GM12878 (cell line): ENCODE measurements at regions of chr10 and their contacts with region 1.

Region 1: DNA sequence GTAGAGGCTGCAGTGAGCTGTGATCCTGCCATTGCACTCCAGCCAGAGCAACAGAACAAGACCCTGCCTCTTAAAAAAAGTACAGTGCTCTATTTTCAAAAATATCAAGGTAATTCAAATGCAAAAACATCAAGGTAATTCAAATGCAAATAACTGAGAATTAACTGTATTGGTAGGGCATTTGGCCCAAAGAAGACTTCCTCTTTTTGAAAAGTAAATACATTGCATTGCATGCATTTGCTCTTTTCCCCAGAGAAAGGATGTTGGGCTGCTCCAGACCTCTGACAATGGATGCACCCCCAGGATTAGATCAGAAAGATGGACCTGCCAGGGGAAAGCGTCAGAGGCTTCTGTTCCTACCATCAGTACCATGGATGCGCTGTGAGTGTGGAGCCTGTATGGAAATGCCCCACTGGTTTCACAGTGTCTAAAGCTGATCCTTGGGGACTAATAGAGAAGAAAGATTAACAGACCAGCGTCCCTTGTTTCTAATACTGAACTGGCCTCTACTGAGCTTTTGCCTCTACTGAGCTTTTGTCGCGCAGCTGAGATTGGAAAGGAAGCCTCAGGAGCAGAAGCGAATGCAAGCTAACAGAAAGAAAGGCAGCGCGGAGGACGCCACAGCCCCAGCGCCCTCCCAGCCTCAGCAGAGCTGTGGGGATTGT is 93.5 kb upstream of the LYZL2 start:
- DNase-seq: no peak
- ATAC-seq: no peak
- H3K4me3 ChIP-seq: no peak overlapping the region
- H3K27ac ChIP-seq: no peak overlapping the region
- H3K4me1 ChIP-seq: peaks cover 6% of the 10 kb centered on the region
- H3K27me3 ChIP-seq: no peaks in the 10 kb centered on the region
- CTCF ChIP-seq: no peak
- EP300 ChIP-seq: no peak
- POLR2A ChIP-seq: no peak
- RAD21 ChIP-seq: no peak

Region 2: DNA sequence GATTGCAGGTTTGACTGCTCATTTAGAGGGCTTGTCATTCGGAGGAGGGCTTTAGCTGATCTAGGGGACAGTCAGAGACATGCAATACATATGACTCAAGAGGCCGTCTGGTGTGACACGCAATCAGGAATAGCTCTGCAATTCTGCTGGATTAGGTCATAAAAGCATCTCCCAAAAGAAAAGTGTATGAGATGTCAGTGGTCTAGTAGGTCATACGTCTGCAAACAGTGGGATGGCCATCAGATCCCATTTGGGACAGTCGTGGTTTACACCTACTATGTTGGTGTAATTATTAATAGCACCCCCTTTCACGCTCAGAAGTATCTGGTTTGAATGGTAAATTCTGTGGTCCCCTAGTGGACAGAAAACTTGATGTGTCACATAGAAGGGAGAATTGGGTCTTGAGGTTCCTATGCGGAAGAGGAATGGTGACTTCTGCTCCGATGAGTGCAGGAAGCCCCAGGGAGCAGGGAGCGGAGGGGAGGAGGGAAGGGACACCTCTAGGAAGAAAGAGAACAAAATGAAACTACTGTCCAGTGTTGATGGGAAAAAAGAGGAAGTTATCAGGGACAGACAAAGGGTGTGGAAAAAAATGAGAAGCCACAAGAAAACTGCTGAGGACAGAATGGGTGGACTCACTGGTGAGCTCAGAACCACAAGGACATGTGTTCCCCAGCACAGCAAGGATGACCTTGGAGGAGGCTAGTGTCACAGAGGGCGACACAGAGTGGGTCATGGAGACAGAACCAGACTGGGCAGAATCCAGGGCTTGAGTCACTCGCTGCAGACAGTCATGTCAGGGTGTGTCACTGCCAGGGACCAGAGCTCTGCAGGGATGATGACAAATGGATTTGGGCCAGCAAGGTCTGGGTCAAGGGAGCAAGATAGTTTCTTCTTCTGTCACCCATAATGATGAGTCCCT is 229.2 kb before region 1 on chr10:
- CTCF ChIA-PET with region 1: no interaction called
- POLR2A ChIA-PET with region 1: no interaction called
- RAD21 ChIA-PET with region 1: no interaction called
- SMC1A ChIA-PET with region 1: no interaction called
- in situ Hi-C with region 1: no loop called
- intact Hi-C with region 1: no loop called
- DNase-seq: no peak
- ATAC-seq: peak; percentile 63
- H3K4me3 ChIP-seq: peak overlapping the region; percentile 40; the same call in 1 of the 2 replicates
- H3K27ac ChIP-seq: peak overlapping the region; percentile 87
- H3K4me1 ChIP-seq: peaks cover 88% of the 10 kb centered on the region
- H3K27me3 ChIP-seq: no peaks in the 10 kb centered on the region
- CTCF ChIP-seq: peak; percentile 20 to 45 (median 37); a peak in 5 of 6 replicates
- EP300 ChIP-seq: peak; percentile 35 to 80; a peak in 1 of 4 replicates
- POLR2A ChIP-seq: no peak
- RAD21 ChIP-seq: peak; percentile 37; the same call in 1 of the 2 replicates

Region 3: DNA sequence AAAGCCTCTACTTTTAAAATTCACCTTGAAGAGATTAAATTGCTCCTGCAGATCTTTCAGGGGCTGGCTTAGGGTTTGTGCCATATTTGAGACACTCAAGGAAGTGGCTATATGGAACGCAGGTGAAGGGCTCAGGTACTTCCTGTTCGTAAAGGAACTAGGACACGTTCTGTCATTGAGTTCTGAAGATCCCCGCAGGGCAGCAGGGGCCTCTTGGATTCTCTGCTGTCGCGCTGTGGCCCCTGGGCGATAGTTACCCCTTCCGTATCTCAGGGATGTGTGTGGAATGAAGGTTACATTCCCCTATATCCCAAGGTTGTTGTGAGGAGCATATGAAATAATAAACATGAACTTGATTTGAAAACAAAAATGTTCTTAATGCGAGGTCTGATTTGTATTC is 114.7 kb before region 1 on chr10:
- CTCF ChIA-PET with region 1: no interaction called
- POLR2A ChIA-PET with region 1: no interaction called
- RAD21 ChIA-PET with region 1: no interaction called
- SMC1A ChIA-PET with region 1: no interaction called
- in situ Hi-C with region 1: no loop called
- intact Hi-C with region 1: no loop called
- DNase-seq: no peak
- ATAC-seq: no peak
- H3K4me3 ChIP-seq: no peak overlapping the region
- H3K27ac ChIP-seq: no peak overlapping the region
- H3K4me1 ChIP-seq: no peaks in the 10 kb centered on the region
- H3K27me3 ChIP-seq: no peaks in the 10 kb centered on the region; a peak in 2 of 4 replicates
- CTCF ChIP-seq: no peak
- EP300 ChIP-seq: no peak
- POLR2A ChIP-seq: no peak
- RAD21 ChIP-seq: no peak

Region 4: GRCh38 chr10:30671026-30671616 is 52.0 kb before region 1 on chr10:
- CTCF ChIA-PET with region 1: interaction called, 23 read pairs
- POLR2A ChIA-PET with region 1: no interaction called
- RAD21 ChIA-PET with region 1: interaction called, 5 read pairs
- SMC1A ChIA-PET with region 1: interaction called, 8 read pairs
- in situ Hi-C with region 1: no loop called
- intact Hi-C with region 1: no loop called
- DNase-seq: no peak
- ATAC-seq: peak; percentile 78
- H3K4me3 ChIP-seq: no peak overlapping the region
- H3K27ac ChIP-seq: no peak overlapping the region
- H3K4me1 ChIP-seq: peaks cover 10% of the 10 kb centered on the region
- H3K27me3 ChIP-seq: no peaks in the 10 kb centered on the region
- CTCF ChIP-seq: peak; percentile 69 to 79 (median 73)
- EP300 ChIP-seq: no peak
- POLR2A ChIP-seq: no peak
- RAD21 ChIP-seq: peak; percentile 73

Region 5: DNA sequence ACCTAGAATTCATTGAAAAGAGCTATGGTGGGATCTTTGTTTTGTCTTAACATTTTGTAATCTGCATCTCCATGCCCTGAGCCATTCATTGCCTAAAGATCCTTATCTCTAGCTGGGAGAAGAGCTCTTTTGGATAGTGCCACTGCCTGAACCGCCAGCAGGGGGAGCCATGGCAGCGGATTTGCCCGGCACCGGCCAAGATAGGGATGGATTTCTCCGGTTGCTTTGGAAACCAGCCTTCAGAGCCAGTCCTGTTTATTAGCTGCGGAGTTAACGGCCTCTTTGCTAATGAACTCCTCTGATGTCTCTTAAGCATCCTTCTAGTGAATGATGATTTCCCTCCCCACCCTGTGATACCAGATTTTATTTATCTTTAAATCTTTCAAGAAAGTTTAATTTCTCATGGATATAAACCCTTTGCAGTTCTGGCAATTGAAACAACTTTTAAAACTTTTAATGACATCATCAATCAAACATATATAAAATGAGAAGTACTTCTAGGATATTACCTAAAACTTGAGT is 35.3 kb before region 1 on chr10:
- CTCF ChIA-PET with region 1: interaction called, 60 read pairs
- POLR2A ChIA-PET with region 1: no interaction called
- RAD21 ChIA-PET with region 1: interaction called, 23 read pairs
- SMC1A ChIA-PET with region 1: interaction called, 35 read pairs
- in situ Hi-C with region 1: no loop called
- intact Hi-C with region 1: loop called (anchors 1 kb)
- DNase-seq: no peak
- ATAC-seq: peak; percentile 97
- H3K4me3 ChIP-seq: no peak overlapping the region
- H3K27ac ChIP-seq: no peak overlapping the region
- H3K4me1 ChIP-seq: peaks cover 5% of the 10 kb centered on the region; the same call in 1 of the 2 replicates
- H3K27me3 ChIP-seq: no peaks in the 10 kb centered on the region
- CTCF ChIP-seq: peak; percentile 88 to 93 (median 89)
- EP300 ChIP-seq: no peak
- POLR2A ChIP-seq: no peak
- RAD21 ChIP-seq: peak; percentile 90

Region 6: GRCh38 chr10:30701451-30702173 is 21.5 kb before region 1 on chr10:
- CTCF ChIA-PET with region 1: interaction called, 4 read pairs
- POLR2A ChIA-PET with region 1: no interaction called
- RAD21 ChIA-PET with region 1: interaction called, 5 read pairs
- SMC1A ChIA-PET with region 1: interaction called, 10 read pairs
- in situ Hi-C with region 1: no loop called
- intact Hi-C with region 1: no loop called
- DNase-seq: peak; percentile 87
- ATAC-seq: peak; percentile 69
- H3K4me3 ChIP-seq: peak overlapping the region; percentile 27; the same call in 1 of the 2 replicates
- H3K27ac ChIP-seq: peak overlapping the region; percentile 99
- H3K4me1 ChIP-seq: peaks cover 43% of the 10 kb centered on the region
- H3K27me3 ChIP-seq: no peaks in the 10 kb centered on the region
- CTCF ChIP-seq: no peak
- EP300 ChIP-seq: peak; percentile 0 to 28; a peak in 2 of 4 replicates
- POLR2A ChIP-seq: peak; percentile 65
- RAD21 ChIP-seq: no peak

Region 7: DNA sequence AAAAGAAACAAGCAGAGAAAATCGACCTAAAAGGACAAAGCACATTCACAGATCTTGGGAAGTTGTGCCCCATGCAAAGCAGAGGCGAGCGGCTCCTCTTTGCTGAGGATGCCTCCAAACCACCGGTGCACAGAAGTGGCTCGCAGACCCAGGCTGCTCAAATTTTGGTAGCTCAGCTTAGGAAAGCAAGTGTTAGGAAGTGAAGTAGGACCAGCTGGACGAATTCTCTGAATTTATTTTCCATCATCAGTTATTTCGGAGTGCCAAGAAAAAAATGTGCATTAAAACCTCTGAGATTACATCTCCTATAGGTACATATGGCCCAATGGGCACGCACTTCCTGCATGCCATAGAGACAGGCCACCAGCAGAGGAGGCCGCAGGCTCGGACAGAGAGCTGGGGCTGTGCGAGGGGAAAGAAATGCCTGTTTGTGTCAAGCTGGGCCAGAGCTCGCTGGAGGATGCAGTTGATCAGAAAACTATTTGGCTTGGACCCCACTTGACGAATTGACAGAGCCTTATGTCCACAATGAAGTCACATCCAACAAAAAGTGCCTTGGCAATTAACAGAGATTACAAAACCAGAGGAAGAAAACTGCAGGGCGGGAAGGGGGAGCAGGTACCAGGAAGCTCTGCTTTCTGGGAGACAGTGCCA is 28.7 kb after region 1 on chr10:
- CTCF ChIA-PET with region 1: interaction called, 16 read pairs
- POLR2A ChIA-PET with region 1: no interaction called
- RAD21 ChIA-PET with region 1: no interaction called
- SMC1A ChIA-PET with region 1: interaction called, 6 read pairs
- in situ Hi-C with region 1: no loop called
- intact Hi-C with region 1: loop called (anchors 1 kb)
- DNase-seq: peak; percentile 32
- ATAC-seq: peak; percentile 87
- H3K4me3 ChIP-seq: no peak overlapping the region
- H3K27ac ChIP-seq: peak overlapping the region; percentile 71
- H3K4me1 ChIP-seq: peaks cover 32% of the 10 kb centered on the region
- H3K27me3 ChIP-seq: no peaks in the 10 kb centered on the region
- CTCF ChIP-seq: peak; percentile 80 to 87 (median 81)
- EP300 ChIP-seq: no peak
- POLR2A ChIP-seq: no peak
- RAD21 ChIP-seq: peak; percentile 97

Region 8: GRCh38 chr10:31490858-31491504 is 767.9 kb after region 1 on chr10:
- CTCF ChIA-PET with region 1: no interaction called
- POLR2A ChIA-PET with region 1: no interaction called
- RAD21 ChIA-PET with region 1: no interaction called
- SMC1A ChIA-PET with region 1: no interaction called
- in situ Hi-C with region 1: no loop called
- intact Hi-C with region 1: loop called (anchors 10 kb)
- DNase-seq: peak; percentile 28
- ATAC-seq: peak; percentile 83
- H3K4me3 ChIP-seq: no peak overlapping the region
- H3K27ac ChIP-seq: no peak overlapping the region
- H3K4me1 ChIP-seq: no peaks in the 10 kb centered on the region
- H3K27me3 ChIP-seq: no peaks in the 10 kb centered on the region
- CTCF ChIP-seq: peak; percentile 53 to 60 (median 53)
- EP300 ChIP-seq: no peak
- POLR2A ChIP-seq: no peak
- RAD21 ChIP-seq: peak; percentile 65

Region 9: GRCh38 chr10:31770307-31770902 is 1047.3 kb after region 1 on chr10:
- CTCF ChIA-PET with region 1: interaction called, 7 read pairs
- POLR2A ChIA-PET with region 1: no interaction called
- RAD21 ChIA-PET with region 1: no interaction called
- SMC1A ChIA-PET with region 1: no interaction called
- in situ Hi-C with region 1: no loop called
- intact Hi-C with region 1: loop called (anchors 2 kb)
- DNase-seq: no peak
- ATAC-seq: peak; percentile 92
- H3K4me3 ChIP-seq: no peak overlapping the region
- H3K27ac ChIP-seq: no peak overlapping the region
- H3K4me1 ChIP-seq: no peaks in the 10 kb centered on the region
- H3K27me3 ChIP-seq: no peaks in the 10 kb centered on the region
- CTCF ChIP-seq: peak; percentile 79 to 88 (median 86)
- EP300 ChIP-seq: no peak
- POLR2A ChIP-seq: no peak
- RAD21 ChIP-seq: peak; percentile 86